Activated naive CD4-positive, alpha-beta T cell treated with anti-CD3 and anti-CD28 coated beads for 36 hours (primary cell): ENCODE measurements at regions of chr14 and their contacts with region 1.

Region 1: GRCh38 chr14:45089813-45090212 is 5.9 kb downstream of the PRPF39 start:
- DNase-seq: peak; percentile 44
- H3K4me3 Mint-ChIP-seq: no peak overlapping the region
- H3K27ac Mint-ChIP-seq: peak overlapping the region; percentile 3
- H3K4me1 Mint-ChIP-seq: peaks cover 76% of the 10 kb centered on the region
- H3K27me3 Mint-ChIP-seq: no peaks in the 10 kb centered on the region

Region 2: GRCh38 chr14:44897045-44897844 is 192.6 kb before region 1 on chr14:
- CTCF ChIA-PET with region 1: no interaction called
- intact Hi-C with region 1: loop called (anchors 1 kb)
- DNase-seq: peak; percentile 99
- H3K4me3 Mint-ChIP-seq: peak overlapping the region; percentile 89
- H3K27ac Mint-ChIP-seq: peak overlapping the region; percentile 83
- H3K4me1 Mint-ChIP-seq: peaks cover 13% of the 10 kb centered on the region
- H3K27me3 Mint-ChIP-seq: no peaks in the 10 kb centered on the region

Region 3: GRCh38 chr14:44982594-44982993 is 107.2 kb before region 1 on chr14:
- CTCF ChIA-PET with region 1: no interaction called
- intact Hi-C with region 1: loop called (anchors 2 kb)
- DNase-seq: no peak
- H3K4me3 Mint-ChIP-seq: no peak overlapping the region
- H3K27ac Mint-ChIP-seq: no peak overlapping the region
- H3K4me1 Mint-ChIP-seq: peaks cover 20% of the 10 kb centered on the region
- H3K27me3 Mint-ChIP-seq: no peaks in the 10 kb centered on the region

Region 4: DNA sequence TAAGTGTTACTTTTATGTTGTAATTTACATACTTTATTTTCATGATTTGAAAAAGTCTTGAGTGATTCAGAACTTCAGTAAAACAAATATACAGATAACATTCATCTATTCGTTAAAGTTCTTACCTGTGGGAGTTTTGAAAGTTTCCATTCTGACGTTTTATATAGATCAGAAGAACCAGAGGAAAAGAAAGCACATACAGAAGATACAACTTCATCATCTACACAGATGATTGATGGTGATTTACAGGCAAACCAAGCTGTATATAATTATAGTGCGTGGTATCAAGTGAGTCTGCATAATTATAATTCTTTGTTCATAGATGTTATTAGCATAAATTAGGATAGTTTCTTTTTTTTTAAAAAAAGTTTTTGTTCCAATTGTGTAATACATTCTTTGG is 24.5 kb after region 1 on chr14:
- CTCF ChIA-PET with region 1: interaction called, 4 read pairs
- intact Hi-C with region 1: loop called (anchors 1 kb)
- DNase-seq: no peak
- H3K4me3 Mint-ChIP-seq: no peak overlapping the region
- H3K27ac Mint-ChIP-seq: peak overlapping the region; percentile 68
- H3K4me1 Mint-ChIP-seq: peaks cover 23% of the 10 kb centered on the region
- H3K27me3 Mint-ChIP-seq: no peaks in the 10 kb centered on the region

Region 5: DNA sequence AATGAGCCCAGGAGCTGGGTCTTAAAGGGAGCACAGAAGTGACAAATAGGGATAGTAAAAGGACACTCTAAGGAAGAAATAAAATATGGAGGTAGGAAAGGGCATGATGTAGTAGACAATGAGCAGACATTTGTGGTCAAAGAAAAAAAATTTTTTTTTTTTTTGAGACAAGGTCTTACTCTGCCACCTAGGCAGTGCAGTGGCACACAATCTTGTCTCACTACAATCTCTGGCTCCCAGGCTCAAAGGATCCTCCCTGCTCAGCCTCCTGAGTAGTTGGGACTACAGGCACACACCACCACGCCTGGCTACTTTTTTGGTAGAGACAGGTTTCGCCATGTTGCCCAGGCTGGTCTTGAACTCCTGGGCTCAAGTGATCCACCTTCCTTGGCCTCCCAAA is 35.9 kb after region 1 on chr14:
- CTCF ChIA-PET with region 1: no interaction called
- intact Hi-C with region 1: no loop called
- DNase-seq: no peak
- H3K4me3 Mint-ChIP-seq: no peak overlapping the region
- H3K27ac Mint-ChIP-seq: no peak overlapping the region
- H3K4me1 Mint-ChIP-seq: peaks cover 3% of the 10 kb centered on the region
- H3K27me3 Mint-ChIP-seq: no peaks in the 10 kb centered on the region

Region 6: GRCh38 chr14:45253068-45253753 is 163.4 kb after region 1 on chr14 and contains the start of gene MIS18BP1:
- CTCF ChIA-PET with region 1: no interaction called
- intact Hi-C with region 1: no loop called
- DNase-seq: peak; percentile 96
- H3K4me3 Mint-ChIP-seq: peak within 1 kb of the TSS; percentile 89
- H3K27ac Mint-ChIP-seq: peak within 1 kb of the TSS; percentile 91
- H3K4me1 Mint-ChIP-seq: peaks cover 15% of the 10 kb centered on the region
- H3K27me3 Mint-ChIP-seq: no peaks in the 10 kb centered on the region
- total RNA-seq, gene MIS18BP1: 55.5 to 56.8 TPM

Region 7: GRCh38 chr14:45400950-45401640 is 311.3 kb after region 1 on chr14:
- CTCF ChIA-PET with region 1: no interaction called
- intact Hi-C with region 1: no loop called
- DNase-seq: no peak
- H3K4me3 Mint-ChIP-seq: no peak overlapping the region
- H3K27ac Mint-ChIP-seq: no peak overlapping the region
- H3K4me1 Mint-ChIP-seq: no peaks in the 10 kb centered on the region
- H3K27me3 Mint-ChIP-seq: no peaks in the 10 kb centered on the region